Kidney (tissue), 22 donors: ENCODE measurements at regions of chr6 and their contacts with region 1.

Region 1: DNA sequence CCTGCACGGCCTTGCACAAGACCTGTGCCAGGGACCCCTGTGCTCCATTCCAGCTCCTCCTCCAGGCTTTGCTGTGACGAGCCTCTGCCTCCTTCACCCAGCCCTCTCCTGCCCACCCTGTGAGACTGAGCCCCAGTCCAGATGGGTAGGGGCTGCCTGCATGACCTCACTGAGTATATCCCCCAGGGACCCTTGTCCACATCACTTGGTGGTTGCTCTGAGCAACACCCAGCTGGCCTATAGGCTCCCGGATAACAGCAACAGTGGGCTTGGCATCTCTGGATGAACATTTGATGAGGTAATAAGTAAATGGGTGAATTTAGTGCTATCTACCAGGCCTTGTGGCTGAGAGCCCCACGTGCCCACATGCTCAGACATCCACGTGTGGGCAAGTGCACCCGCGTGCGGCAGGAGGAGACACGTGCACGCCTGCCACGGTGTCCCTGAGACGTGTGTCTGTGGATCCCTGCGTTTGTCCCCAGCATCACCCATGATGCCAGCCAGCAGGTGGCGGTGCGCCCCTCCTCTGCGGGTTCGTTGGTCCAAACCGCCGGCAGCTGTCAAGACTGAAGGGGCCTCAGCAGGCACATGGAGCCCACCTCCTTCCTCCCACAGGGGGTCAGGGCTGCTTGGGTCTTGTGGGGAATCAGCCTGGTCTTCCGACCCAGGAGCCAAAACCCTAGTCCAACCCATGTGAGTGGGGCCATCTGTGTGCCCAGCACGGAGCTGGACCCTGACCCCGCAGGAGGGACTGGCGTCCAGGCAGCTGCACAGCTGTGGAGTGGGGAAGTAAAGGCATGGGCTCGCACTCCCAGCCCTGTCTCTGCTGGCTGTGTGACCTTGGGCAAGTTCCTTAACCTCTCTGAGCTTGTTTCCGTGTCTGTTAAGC is 45.9 kb downstream of the FGD2 start:
- DNase-seq: peak; percentile 90 to 96 (median 94)
- H3K4me3 ChIP-seq: no peak overlapping the region
- H3K27ac ChIP-seq: no peak overlapping the region
- H3K4me1 ChIP-seq: peaks cover 0 to 17% (median 0%) of the 10 kb centered on the region in 3 donors
- H3K27me3 ChIP-seq: no peaks in the 10 kb centered on the region
- CTCF ChIP-seq: peak; percentile 94

Region 2: DNA sequence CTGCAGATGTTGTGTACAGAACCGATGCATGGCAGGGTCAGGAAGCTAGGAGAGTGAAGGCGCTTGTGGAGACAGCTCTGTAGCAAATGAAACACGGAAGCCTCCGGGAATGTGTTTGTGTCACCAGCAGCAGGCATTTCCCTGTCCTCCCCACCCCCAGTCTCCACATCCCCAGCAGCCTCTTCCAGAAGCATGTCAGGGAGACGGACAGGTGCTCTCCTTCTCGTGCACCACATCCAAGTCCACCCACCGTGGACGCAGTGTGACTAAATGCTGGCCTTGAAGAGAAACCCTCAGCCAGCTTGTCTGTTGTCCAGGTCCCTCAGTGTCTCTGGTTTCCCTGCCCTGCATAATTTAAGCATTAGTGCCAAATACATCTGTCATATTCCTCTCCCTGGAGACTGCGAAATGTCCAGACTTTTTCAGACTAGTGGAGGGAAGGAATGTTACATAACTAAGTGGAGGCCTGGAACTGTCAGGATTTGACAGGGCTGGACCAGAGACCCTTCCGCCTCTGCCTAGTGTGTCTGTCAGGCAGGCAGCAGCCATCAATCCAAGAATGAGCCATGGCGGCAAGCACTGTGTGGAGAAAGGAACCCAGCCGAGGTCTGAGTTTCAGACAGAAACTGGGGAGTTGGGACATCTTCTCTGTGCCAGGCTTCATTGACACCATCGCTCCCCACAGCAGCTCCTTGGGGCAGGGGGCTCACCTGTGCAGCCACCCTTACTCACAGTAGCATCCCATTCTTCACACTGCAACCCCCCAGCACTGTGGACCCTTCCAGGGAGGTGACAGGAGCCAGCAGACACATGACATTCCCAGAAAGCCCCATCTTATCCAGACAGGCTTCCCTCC is 123.5 kb before region 1 on chr6:
- intact Hi-C with region 1: no loop called
- DNase-seq: no peak
- H3K4me3 ChIP-seq: no peak overlapping the region
- H3K27ac ChIP-seq: no peak overlapping the region
- H3K4me1 ChIP-seq: no peaks in the 10 kb centered on the region
- H3K27me3 ChIP-seq: no peaks in the 10 kb centered on the region
- CTCF ChIP-seq: no peak

Region 3: DNA sequence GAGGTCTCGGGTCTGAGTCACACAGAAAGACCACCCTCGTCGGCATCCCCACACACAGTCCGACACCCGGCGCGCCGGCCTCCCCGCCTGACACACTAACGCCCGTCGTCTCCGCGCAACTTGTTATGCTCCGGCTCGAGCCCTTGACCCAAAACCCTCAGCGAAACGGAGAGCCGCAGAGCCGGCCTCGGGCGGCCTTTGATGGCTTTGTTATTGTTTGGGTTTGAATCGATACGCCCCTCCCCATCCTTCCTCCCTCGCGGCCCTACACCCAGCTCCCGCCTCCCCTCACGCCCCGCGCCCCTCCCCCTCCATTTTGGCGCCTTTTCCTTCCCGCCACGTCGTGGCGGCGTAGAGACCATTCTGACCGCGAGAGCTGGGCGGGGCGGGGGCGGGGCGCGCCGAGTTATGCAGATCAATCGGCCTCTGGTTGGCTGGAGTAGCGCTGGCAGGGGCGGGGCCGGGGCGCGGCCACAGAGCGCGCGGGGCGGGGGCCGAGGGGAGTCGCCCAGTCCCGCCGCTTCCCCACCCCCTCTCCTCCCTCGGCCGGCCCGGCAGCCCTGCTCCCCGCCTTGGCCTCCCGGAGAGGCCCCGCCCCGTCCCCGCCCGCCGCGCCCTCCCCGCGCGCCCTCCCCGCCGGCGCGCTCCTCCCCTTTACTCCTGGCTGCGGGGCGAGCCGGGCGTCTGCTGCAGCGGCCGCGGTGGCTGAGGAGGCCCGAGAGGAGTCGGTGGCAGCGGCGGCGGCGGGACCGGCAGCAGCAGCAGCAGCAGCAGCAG is 118.3 kb after region 1 on chr6 and contains the start of gene PIM1:
- intact Hi-C with region 1: loop called (anchors 10 kb)
- DNase-seq: peak; percentile 98 to 100 (median 100)
- H3K4me3 ChIP-seq: peak within 1 kb of the TSS; percentile 71 to 78 (median 74)
- H3K27ac ChIP-seq: peak within 1 kb of the TSS; percentile 96
- H3K4me1 ChIP-seq: peaks cover 0 to 11% (median 8%) of the 10 kb centered on the region in 3 donors
- H3K27me3 ChIP-seq: no peaks in the 10 kb centered on the region
- CTCF ChIP-seq: no peak
- total RNA-seq, gene PIM1: 30.4 TPM

Region 4: GRCh38 chr6:37210313-37210968 is 159.1 kb after region 1 on chr6:
- intact Hi-C with region 1: loop called (anchors 10 kb)
- DNase-seq: peak in 4 of 5 donors; percentile 88 to 95 (median 91)
- H3K4me3 ChIP-seq: no peak overlapping the region
- H3K27ac ChIP-seq: no peak overlapping the region
- H3K4me1 ChIP-seq: no peaks in the 10 kb centered on the region
- H3K27me3 ChIP-seq: no peaks in the 10 kb centered on the region
- CTCF ChIP-seq: peak; percentile 95

Region 5: GRCh38 chr6:37473397-37474095 is 422.2 kb after region 1 on chr6:
- intact Hi-C with region 1: no loop called
- DNase-seq: no peak
- H3K4me3 ChIP-seq: no peak overlapping the region
- H3K27ac ChIP-seq: no peak overlapping the region
- H3K4me1 ChIP-seq: peaks cover 0 to 8% (median 3%) of the 10 kb centered on the region in 3 donors
- H3K27me3 ChIP-seq: no peaks in the 10 kb centered on the region
- CTCF ChIP-seq: no peak